ENCODE measurements at regions of chr17 and their contacts with region 1.

Region 1: DNA sequence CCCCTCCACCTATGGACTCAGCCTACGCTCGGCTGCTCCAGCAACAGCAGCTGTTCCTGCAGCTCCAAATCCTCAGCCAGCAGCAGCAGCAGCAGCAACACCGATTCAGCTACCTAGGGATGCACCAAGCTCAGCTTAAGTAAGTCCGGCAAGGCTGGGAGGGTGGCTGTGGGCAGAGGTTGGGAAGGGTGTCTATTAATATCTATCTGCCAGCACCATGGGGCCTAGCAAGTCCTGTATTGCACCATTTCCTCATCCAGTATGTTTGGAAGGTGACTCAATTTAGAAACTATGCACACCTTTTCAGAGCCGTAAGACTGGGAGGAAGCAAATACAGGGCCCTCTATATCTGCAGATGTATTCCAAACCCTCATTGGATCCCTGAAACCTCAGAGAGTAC is 45.0 kb upstream of the ARHGAP44 start:
- DNase-seq: no peak
- ATAC-seq: no peak
- H3K4me3 ChIP-seq: no peak overlapping the region
- H3K27ac ChIP-seq: no peak overlapping the region
- H3K4me1 ChIP-seq: no peaks in the 10 kb centered on the region
- H3K27me3 ChIP-seq: peaks cover 0 to 6% of the 10 kb centered on the region in 2 experiments; a peak in 2 of 5 replicates
- CTCF ChIP-seq: no peak
- EP300 ChIP-seq: no peak
- POLR2A ChIP-seq: no peak
- RAD21 ChIP-seq: no peak

Region 2: GRCh38 chr17:12180644-12181261 is 563.5 kb before region 1 on chr17:
- CTCF ChIA-PET with region 1: no interaction called
- POLR2A ChIA-PET with region 1: no interaction called
- in situ Hi-C with region 1: no loop called
- intact Hi-C with region 1: loop called (anchors 5 kb)
- DNase-seq: peak; percentile 23 to 58 (median 28)
- ATAC-seq: peak; percentile 61
- H3K4me3 ChIP-seq: no peak overlapping the region
- H3K27ac ChIP-seq: no peak overlapping the region
- H3K4me1 ChIP-seq: no peaks in the 10 kb centered on the region
- H3K27me3 ChIP-seq: no peaks in the 10 kb centered on the region; a peak in 1 of 5 replicates
- CTCF ChIP-seq: peak; percentile 42 to 73 (median 61); a peak in 5 of 6 replicates
- EP300 ChIP-seq: no peak
- POLR2A ChIP-seq: no peak
- RAD21 ChIP-seq: peak; percentile 50 to 70

Region 3: GRCh38 chr17:12256380-12256995 is 487.8 kb before region 1 on chr17:
- CTCF ChIA-PET with region 1: no interaction called
- POLR2A ChIA-PET with region 1: no interaction called
- in situ Hi-C with region 1: no loop called
- intact Hi-C with region 1: loop called (anchors 5 kb)
- DNase-seq: peak; percentile 23 to 43 (median 30)
- ATAC-seq: peak; percentile 47; the same call in 1 of the 3 replicates
- H3K4me3 ChIP-seq: no peak overlapping the region
- H3K27ac ChIP-seq: no peak overlapping the region
- H3K4me1 ChIP-seq: no peaks in the 10 kb centered on the region
- H3K27me3 ChIP-seq: peaks cover 0 to 6% of the 10 kb centered on the region in 2 experiments; a peak in 2 of 5 replicates
- CTCF ChIP-seq: peak; percentile 35 to 64 (median 52); a peak in 3 of 6 replicates
- EP300 ChIP-seq: no peak
- POLR2A ChIP-seq: no peak
- RAD21 ChIP-seq: peak; percentile 47 to 66

Region 4: DNA sequence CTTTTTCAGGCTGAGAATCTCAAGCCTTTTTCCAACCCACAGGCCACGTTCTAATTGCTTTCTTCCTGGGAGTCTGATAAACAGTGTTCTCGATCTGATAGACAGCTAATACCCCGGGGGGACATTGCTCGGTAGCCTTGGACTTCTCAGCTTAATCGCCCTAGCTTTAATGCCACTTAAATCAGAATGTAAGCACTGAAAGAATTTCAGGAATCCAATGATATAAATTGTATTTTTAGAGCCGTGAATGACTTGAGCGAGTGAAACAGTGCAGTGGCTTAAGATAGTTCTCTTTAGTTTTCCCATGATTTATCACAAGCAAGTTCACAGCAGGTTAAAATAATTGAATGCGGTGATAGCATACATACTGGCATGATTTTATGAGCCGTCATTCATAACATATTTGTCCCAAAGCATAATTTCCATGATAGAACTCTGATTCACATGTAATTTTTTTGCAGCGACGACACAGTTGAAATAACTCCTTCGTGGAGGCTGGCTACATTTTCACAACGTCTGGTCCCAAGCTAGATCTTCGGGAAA is 194.7 kb before region 1 on chr17:
- CTCF ChIA-PET with region 1: no interaction called
- POLR2A ChIA-PET with region 1: no interaction called
- in situ Hi-C with region 1: no loop called
- intact Hi-C with region 1: loop called (anchors 10 kb)
- DNase-seq: no peak
- ATAC-seq: no peak
- H3K4me3 ChIP-seq: no peak overlapping the region
- H3K27ac ChIP-seq: no peak overlapping the region
- H3K4me1 ChIP-seq: no peaks in the 10 kb centered on the region
- H3K27me3 ChIP-seq: no peaks in the 10 kb centered on the region; a peak in 1 of 5 replicates
- CTCF ChIP-seq: no peak
- EP300 ChIP-seq: no peak
- POLR2A ChIP-seq: no peak
- RAD21 ChIP-seq: no peak

Region 5: GRCh38 chr17:12842936-12843335 is 98.6 kb after region 1 on chr17:
- CTCF ChIA-PET with region 1: no interaction called
- POLR2A ChIA-PET with region 1: no interaction called
- in situ Hi-C with region 1: no loop called
- intact Hi-C with region 1: no loop called
- DNase-seq: no peak
- ATAC-seq: no peak
- H3K4me3 ChIP-seq: no peak overlapping the region
- H3K27ac ChIP-seq: no peak overlapping the region
- H3K4me1 ChIP-seq: no peaks in the 10 kb centered on the region
- H3K27me3 ChIP-seq: no peaks in the 10 kb centered on the region
- CTCF ChIP-seq: no peak
- EP300 ChIP-seq: no peak
- POLR2A ChIP-seq: no peak
- RAD21 ChIP-seq: no peak

Region 6: DNA sequence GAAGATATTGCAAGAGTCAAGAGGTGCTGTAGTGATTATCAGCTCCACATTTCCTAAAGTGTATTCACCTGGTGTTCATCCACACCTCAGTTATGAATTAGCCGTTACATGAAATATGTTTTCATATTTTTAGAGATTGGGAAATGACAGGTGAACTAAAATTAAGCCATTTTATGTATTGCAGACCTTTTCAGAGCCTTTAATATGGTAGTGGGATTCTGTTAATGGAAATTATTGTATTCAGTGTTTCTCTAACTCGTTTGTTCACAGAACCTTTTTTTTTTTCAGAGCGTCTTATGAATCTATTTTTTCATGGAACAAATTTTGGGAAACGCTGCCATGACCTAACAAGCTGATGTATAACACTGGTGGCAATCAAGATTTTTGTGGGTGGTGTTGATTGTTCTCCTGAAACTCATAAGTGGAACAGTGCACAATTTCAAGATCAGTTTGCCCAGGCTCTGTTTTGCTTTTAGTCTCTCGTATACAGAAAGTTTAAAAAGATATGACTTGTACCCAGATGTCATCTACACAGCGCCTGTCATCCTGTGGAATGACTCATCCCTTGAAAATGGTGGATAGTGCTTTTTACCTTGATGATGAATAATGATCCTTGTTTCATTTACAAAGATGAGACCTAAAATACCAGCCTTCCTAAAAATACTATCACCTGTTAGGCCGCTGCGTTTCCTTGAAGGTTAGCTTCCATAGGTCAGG is 133.8 kb after region 1 on chr17:
- CTCF ChIA-PET with region 1: no interaction called
- POLR2A ChIA-PET with region 1: no interaction called
- in situ Hi-C with region 1: no loop called
- intact Hi-C with region 1: no loop called
- DNase-seq: no peak
- ATAC-seq: no peak
- H3K4me3 ChIP-seq: no peak overlapping the region
- H3K27ac ChIP-seq: no peak overlapping the region
- H3K4me1 ChIP-seq: no peaks in the 10 kb centered on the region
- H3K27me3 ChIP-seq: no peaks in the 10 kb centered on the region
- CTCF ChIP-seq: no peak
- EP300 ChIP-seq: no peak
- POLR2A ChIP-seq: no peak
- RAD21 ChIP-seq: no peak

Region 7: GRCh38 chr17:12898110-12898509 is 153.8 kb after region 1 on chr17:
- CTCF ChIA-PET with region 1: no interaction called
- POLR2A ChIA-PET with region 1: no interaction called
- in situ Hi-C with region 1: no loop called
- intact Hi-C with region 1: no loop called
- DNase-seq: no peak
- ATAC-seq: no peak
- H3K4me3 ChIP-seq: no peak overlapping the region
- H3K27ac ChIP-seq: no peak overlapping the region
- H3K4me1 ChIP-seq: no peaks in the 10 kb centered on the region
- H3K27me3 ChIP-seq: no peaks in the 10 kb centered on the region
- CTCF ChIP-seq: no peak
- EP300 ChIP-seq: no peak
- POLR2A ChIP-seq: no peak
- RAD21 ChIP-seq: no peak

Region 8: GRCh38 chr17:12909046-12909445 is 164.7 kb after region 1 on chr17:
- CTCF ChIA-PET with region 1: no interaction called
- POLR2A ChIA-PET with region 1: no interaction called
- in situ Hi-C with region 1: no loop called
- intact Hi-C with region 1: no loop called
- DNase-seq: no peak
- ATAC-seq: no peak
- H3K4me3 ChIP-seq: no peak overlapping the region
- H3K27ac ChIP-seq: no peak overlapping the region
- H3K4me1 ChIP-seq: no peaks in the 10 kb centered on the region
- H3K27me3 ChIP-seq: no peaks in the 10 kb centered on the region
- CTCF ChIP-seq: no peak
- EP300 ChIP-seq: no peak
- POLR2A ChIP-seq: no peak
- RAD21 ChIP-seq: no peak

Region 9: DNA sequence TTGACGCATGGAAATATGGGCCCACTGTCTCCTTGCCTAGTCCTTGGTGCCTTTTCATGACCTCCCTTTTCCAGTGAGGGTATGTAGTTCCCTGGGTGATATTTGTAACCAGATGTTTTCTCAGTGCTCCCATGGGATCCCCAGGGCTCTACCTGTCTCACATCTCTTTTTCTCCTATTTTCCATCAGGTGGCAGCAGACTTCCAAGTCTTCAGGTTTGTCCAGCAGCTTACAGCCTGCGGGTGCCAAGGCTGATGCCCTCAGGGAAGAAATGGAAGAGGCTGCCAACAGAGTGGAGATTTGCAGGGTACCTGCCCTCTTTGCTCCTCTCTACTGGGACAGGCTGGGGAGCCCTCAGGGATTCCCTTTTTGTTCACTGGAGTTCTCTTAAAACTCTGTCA is 184.4 kb after region 1 on chr17:
- CTCF ChIA-PET with region 1: no interaction called
- POLR2A ChIA-PET with region 1: no interaction called
- in situ Hi-C with region 1: no loop called
- intact Hi-C with region 1: loop called (anchors 5 kb)
- DNase-seq: no peak
- ATAC-seq: no peak
- H3K4me3 ChIP-seq: no peak overlapping the region
- H3K27ac ChIP-seq: no peak overlapping the region
- H3K4me1 ChIP-seq: no peaks in the 10 kb centered on the region; a peak in 1 of 5 replicates
- H3K27me3 ChIP-seq: no peaks in the 10 kb centered on the region
- CTCF ChIP-seq: peak in 2 of 3 experiments; percentile 8; a peak in 1 of 6 replicates
- EP300 ChIP-seq: no peak
- POLR2A ChIP-seq: no peak
- RAD21 ChIP-seq: no peak